ENCODE measurements at regions of chr1 and their contacts with region 1.

Region 1: DNA sequence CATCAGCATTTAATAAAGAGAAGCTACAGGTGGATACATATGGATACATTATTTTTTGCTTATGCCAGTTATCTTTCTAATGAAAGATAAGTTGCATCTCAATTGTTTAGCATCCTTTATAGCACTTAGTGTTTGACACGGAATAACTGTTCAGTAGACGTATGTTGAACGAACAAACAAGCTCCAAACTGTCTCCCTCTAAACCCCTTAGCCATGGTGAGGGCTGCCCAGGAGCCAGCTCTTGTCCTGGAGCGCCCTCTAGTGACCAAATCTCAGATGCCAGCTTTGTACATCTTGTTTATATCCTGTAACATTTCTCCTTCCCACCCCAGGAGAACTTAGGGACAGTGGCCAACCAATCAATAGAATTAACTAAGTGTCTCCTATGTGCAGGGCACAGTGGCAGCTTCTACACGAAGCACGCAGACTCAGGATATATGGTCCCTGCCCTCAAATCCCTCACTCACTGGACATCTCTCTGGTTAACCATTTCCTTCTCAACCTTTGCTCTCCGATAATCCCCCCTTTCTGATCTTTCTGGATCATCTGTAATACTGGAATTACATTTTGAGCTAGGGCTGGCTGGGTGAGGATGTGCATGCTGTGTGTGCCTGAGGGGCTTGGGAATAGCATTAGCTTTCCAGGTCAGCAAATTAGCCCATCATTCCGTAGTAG is 22.9 kb downstream of the KCNA10 start:
- DNase-seq: peak; percentile 88
- ATAC-seq: peak; percentile 95
- H3K4me3 ChIP-seq: no peak overlapping the region
- H3K27ac ChIP-seq: no peak overlapping the region
- H3K4me1 ChIP-seq: no peaks in the 10 kb centered on the region
- H3K27me3 ChIP-seq: no peaks in the 10 kb centered on the region
- CTCF ChIP-seq: peak; percentile 96

Region 2: GRCh38 chr1:110203021-110203661 is 292.9 kb before region 1 on chr1:
- CTCF ChIA-PET with region 1: interaction called, 8 read pairs
- POLR2A ChIA-PET with region 1: no interaction called
- intact Hi-C with region 1: loop called (anchors 1 kb)
- DNase-seq: peak; percentile 94
- ATAC-seq: peak; percentile 72
- H3K4me3 ChIP-seq: no peak overlapping the region
- H3K27ac ChIP-seq: peak overlapping the region; percentile 51
- H3K4me1 ChIP-seq: peaks cover 10% of the 10 kb centered on the region
- H3K27me3 ChIP-seq: no peaks in the 10 kb centered on the region
- CTCF ChIP-seq: peak; percentile 92

Region 3: GRCh38 chr1:110412576-110412975 is 83.5 kb before region 1 on chr1:
- CTCF ChIA-PET with region 1: interaction called, 9 read pairs
- POLR2A ChIA-PET with region 1: no interaction called
- intact Hi-C with region 1: loop called (anchors 1 kb)
- DNase-seq: peak; percentile 78
- ATAC-seq: peak; percentile 83
- H3K4me3 ChIP-seq: no peak overlapping the region
- H3K27ac ChIP-seq: no peak overlapping the region
- H3K4me1 ChIP-seq: peaks cover 8% of the 10 kb centered on the region; the same call in 1 of the 2 replicates
- H3K27me3 ChIP-seq: no peaks in the 10 kb centered on the region
- CTCF ChIP-seq: peak; percentile 90

Region 4: DNA sequence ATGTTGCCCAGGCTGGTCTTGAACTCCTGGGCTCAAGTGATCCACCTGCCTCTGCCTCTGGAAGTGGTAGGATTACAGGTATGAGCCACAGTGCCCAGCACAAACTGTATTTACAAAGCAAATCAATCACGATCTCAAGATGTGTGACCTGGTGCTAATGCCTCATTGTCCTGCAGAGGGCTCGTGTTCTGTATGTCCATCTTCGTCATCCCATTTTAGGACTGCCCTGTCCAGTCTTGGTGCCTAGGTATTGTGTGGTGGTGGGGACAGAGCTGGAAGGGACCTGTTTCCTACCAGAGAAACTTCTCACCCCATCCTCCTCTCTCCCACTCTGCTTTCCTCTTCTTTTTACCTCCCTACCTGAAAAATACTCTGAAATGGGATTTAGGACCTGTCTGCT is 24.9 kb before region 1 on chr1:
- CTCF ChIA-PET with region 1: interaction called, 5 read pairs
- POLR2A ChIA-PET with region 1: interaction called, 7 read pairs
- intact Hi-C with region 1: loop called (anchors 1 kb)
- DNase-seq: peak; percentile 28
- ATAC-seq: peak; percentile 70; the same call in 1 of the 2 replicates
- H3K4me3 ChIP-seq: no peak overlapping the region
- H3K27ac ChIP-seq: no peak overlapping the region
- H3K4me1 ChIP-seq: peaks cover 1% of the 10 kb centered on the region
- H3K27me3 ChIP-seq: no peaks in the 10 kb centered on the region
- CTCF ChIP-seq: peak; percentile 45

Region 5: GRCh38 chr1:110477041-110477440 is 19.0 kb before region 1 on chr1:
- CTCF ChIA-PET with region 1: interaction called, 14 read pairs
- POLR2A ChIA-PET with region 1: interaction called, 7 read pairs
- intact Hi-C with region 1: loop called (anchors 2 kb)
- DNase-seq: peak; percentile 90
- ATAC-seq: peak; percentile 61
- H3K4me3 ChIP-seq: peak overlapping the region; percentile 19; the same call in 1 of the 2 replicates
- H3K27ac ChIP-seq: peak overlapping the region; percentile 90
- H3K4me1 ChIP-seq: peaks cover 32% of the 10 kb centered on the region
- H3K27me3 ChIP-seq: no peaks in the 10 kb centered on the region
- CTCF ChIP-seq: no peak

Region 6: GRCh38 chr1:110548381-110548780 is 52.3 kb after region 1 on chr1:
- CTCF ChIA-PET with region 1: no interaction called
- POLR2A ChIA-PET with region 1: no interaction called
- intact Hi-C with region 1: no loop called
- DNase-seq: peak; percentile 62
- ATAC-seq: peak; percentile 92
- H3K4me3 ChIP-seq: no peak overlapping the region
- H3K27ac ChIP-seq: no peak overlapping the region
- H3K4me1 ChIP-seq: no peaks in the 10 kb centered on the region
- H3K27me3 ChIP-seq: peaks cover 43% of the 10 kb centered on the region
- CTCF ChIP-seq: peak; percentile 63

Measured in PC-3 (cell line).